ENCODE measurements at regions of chr16 and their contacts with region 1.

Region 1: DNA sequence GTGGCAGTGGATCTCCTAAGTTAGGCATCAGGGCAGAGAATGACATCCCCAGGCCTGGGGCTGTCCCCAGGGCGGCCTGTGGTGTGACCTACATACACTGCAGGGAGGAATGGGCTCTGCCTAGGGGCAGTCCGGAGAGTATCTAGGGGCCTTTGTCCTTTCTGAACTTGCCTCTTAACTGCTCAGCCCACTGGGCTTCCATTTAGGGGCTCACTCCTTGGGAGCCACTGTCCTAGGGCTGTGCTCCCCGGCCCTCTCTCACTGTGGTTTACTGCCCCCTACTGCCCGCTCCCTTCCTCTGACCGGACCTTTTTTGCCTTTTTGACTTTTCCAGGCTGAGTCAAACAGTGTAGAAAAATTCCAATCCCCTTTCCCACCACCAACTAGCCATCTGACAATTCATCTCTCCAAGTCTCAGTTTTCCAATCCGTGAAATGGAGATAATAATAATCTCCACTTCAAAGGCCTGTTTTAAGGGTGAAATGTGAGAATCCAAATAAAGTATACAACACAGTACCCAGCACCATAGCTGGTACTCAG is 66.8 kb downstream of the DNAH3 start:
- DNase-seq: peak; percentile 65
- ATAC-seq: peak; percentile 76
- H3K4me3 Mint-ChIP-seq: no peak overlapping the region
- H3K27ac Mint-ChIP-seq: no peak overlapping the region
- H3K4me1 Mint-ChIP-seq: no peaks in the 10 kb centered on the region
- H3K27me3 Mint-ChIP-seq: no peaks in the 10 kb centered on the region
- CTCF ChIP-seq: peak; percentile 76

Region 2: DNA sequence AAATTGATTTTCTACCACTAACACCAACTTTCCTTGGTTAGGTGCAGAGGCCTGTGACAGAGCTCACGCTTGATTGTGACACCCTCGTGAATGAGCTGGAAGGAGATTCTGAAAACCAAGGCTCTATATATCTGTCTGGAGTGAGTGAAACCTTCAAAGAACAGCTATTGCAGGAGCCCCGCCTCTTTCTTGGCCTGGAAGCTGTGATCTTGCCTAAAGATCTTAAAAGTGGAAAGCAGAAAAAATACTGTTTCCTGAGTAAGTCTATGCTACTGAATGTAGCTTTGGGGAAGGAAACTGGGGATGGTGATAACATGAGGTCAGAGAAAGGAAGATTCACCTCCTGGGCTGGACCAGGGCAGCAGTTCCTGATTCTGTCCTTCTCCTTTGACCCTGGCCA is 239.2 kb before region 1 on chr16:
- CTCF ChIA-PET with region 1: interaction called, 30 read pairs
- POLR2A ChIA-PET with region 1: no interaction called
- intact Hi-C with region 1: loop called (anchors 10 kb)
- DNase-seq: peak; percentile 31
- ATAC-seq: peak; percentile 72
- H3K4me3 Mint-ChIP-seq: no peak overlapping the region
- H3K27ac Mint-ChIP-seq: peak overlapping the region; percentile 74
- H3K4me1 Mint-ChIP-seq: peaks cover 24% of the 10 kb centered on the region
- H3K27me3 Mint-ChIP-seq: no peaks in the 10 kb centered on the region
- CTCF ChIP-seq: no peak

Region 3: GRCh38 chr16:21005008-21005407 is 78.8 kb before region 1 on chr16:
- CTCF ChIA-PET with region 1: no interaction called
- POLR2A ChIA-PET with region 1: no interaction called
- intact Hi-C with region 1: no loop called
- DNase-seq: no peak
- ATAC-seq: no peak
- H3K4me3 Mint-ChIP-seq: no peak overlapping the region
- H3K27ac Mint-ChIP-seq: no peak overlapping the region
- H3K4me1 Mint-ChIP-seq: no peaks in the 10 kb centered on the region
- H3K27me3 Mint-ChIP-seq: peaks cover 7% of the 10 kb centered on the region
- CTCF ChIP-seq: no peak

Region 4: DNA sequence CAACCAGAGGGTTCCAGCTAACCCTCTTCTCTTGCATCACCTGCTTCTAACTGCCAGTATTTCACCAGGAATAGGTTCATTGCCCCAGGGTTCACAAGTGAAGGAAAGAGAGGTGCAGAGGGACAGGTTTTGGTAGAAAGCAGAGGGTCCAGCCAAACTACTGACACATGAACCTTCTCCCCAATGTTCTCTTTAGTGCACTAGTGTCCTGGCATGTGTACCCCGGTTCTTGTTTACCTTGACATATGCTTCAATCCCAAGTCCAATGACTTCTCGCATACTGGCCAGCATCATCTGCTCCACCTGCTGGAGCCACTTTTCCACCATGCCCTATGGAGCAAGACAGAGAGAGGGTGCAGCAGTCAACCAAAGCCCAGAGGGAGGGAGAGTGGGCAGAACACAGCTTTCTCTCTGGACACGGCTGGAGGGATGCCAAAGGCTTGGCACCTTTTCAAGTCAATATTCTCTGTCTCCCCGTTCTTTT is 23.7 kb before region 1 on chr16:
- CTCF ChIA-PET with region 1: no interaction called
- POLR2A ChIA-PET with region 1: no interaction called
- intact Hi-C with region 1: no loop called
- DNase-seq: no peak
- ATAC-seq: no peak
- H3K4me3 Mint-ChIP-seq: no peak overlapping the region
- H3K27ac Mint-ChIP-seq: no peak overlapping the region
- H3K4me1 Mint-ChIP-seq: no peaks in the 10 kb centered on the region
- H3K27me3 Mint-ChIP-seq: peaks cover 5% of the 10 kb centered on the region
- CTCF ChIP-seq: no peak